Activated naive CD4-positive, alpha-beta T cell treated with anti-CD3 and anti-CD28 coated beads for 36 hours (primary cell): ENCODE measurements at regions of chr12 and their contacts with region 1.

Region 1: GRCh38 chr12:94101738-94102660 is 46.4 kb upstream of the PLXNC1 start:
- DNase-seq: peak; percentile 93
- H3K4me3 Mint-ChIP-seq: peak overlapping the region; percentile 78
- H3K27ac Mint-ChIP-seq: peak overlapping the region; percentile 7
- H3K4me1 Mint-ChIP-seq: peaks cover 16% of the 10 kb centered on the region
- H3K27me3 Mint-ChIP-seq: no peaks in the 10 kb centered on the region

Region 2: DNA sequence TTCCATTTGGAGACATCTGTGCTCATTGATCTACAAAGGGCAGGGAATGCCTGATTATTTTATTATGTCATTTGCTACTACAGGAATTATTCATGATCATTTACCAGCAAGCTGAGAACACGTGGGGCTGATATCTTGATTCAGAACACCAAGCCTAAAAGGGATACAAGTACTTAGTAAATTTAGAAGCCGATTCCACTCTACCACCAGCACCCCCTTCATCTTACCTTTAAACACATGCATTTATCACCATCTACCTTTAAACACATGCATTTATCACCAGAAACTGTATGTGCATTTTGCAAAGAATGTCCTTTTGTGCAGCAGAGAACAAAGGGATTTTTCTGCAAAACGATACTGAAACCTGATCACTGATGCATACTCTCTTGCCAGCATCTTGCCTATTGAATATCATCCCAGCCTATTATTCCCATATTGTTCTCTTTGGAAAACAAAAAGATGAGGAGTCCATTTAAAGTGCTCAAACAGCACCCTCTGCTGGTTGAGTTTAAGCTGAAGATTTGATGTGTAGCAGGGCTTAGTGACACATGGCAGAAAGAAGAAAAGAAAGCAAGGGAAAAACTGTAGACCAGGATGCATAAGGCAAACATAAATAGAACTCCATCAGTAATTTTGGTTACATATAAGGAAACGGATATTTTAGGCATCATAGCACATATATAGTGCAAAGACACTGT is 1531.8 kb before region 1 on chr12:
- CTCF ChIA-PET with region 1: no interaction called
- intact Hi-C with region 1: loop called (anchors 10 kb)
- DNase-seq: peak; percentile 67
- H3K4me3 Mint-ChIP-seq: no peak overlapping the region
- H3K27ac Mint-ChIP-seq: no peak overlapping the region
- H3K4me1 Mint-ChIP-seq: peaks cover 32% of the 10 kb centered on the region
- H3K27me3 Mint-ChIP-seq: no peaks in the 10 kb centered on the region

Region 3: DNA sequence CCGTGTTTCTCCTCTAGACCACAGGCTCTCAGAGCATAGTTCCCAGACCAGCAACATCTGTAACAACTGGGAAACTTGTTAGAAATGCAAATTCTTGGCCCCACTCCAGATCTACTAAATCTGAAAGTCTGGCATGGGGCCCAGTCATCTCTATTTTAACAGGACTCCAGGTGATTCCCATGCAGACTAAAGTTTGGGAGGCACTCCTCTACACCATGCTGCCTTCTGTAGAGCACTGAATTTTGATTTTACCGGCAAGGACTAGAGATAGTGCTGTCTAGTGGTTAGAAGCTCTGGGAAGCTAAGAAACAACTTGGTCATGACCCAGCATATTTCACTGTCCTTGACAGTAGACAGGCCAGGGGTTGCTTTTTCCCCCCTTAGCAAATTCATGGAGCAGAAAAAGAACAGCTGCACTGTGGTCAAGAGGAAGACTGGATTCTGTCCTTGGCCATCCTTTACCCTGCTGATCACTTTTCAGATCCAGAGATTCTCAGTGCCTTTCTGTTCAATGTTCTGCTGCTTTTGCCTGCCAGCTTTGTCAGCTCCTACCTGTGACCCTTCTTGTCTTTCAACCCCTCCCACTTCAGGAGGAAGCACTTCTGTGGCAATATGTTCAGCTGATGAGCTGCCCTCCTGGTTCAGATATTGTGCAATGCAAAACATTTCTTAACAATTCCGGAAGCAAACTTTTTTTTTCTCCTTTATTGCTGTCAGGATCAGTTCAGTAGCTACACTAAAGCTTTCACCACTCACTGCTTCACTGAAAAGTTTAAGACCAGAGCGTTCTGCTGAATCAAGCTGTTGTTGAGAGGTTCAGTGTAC is 858.1 kb before region 1 on chr12:
- CTCF ChIA-PET with region 1: no interaction called
- intact Hi-C with region 1: loop called (anchors 10 kb)
- DNase-seq: peak; percentile 53
- H3K4me3 Mint-ChIP-seq: peak overlapping the region; percentile 49
- H3K27ac Mint-ChIP-seq: peak overlapping the region; percentile 82
- H3K4me1 Mint-ChIP-seq: peaks cover 34% of the 10 kb centered on the region
- H3K27me3 Mint-ChIP-seq: no peaks in the 10 kb centered on the region

Region 4: DNA sequence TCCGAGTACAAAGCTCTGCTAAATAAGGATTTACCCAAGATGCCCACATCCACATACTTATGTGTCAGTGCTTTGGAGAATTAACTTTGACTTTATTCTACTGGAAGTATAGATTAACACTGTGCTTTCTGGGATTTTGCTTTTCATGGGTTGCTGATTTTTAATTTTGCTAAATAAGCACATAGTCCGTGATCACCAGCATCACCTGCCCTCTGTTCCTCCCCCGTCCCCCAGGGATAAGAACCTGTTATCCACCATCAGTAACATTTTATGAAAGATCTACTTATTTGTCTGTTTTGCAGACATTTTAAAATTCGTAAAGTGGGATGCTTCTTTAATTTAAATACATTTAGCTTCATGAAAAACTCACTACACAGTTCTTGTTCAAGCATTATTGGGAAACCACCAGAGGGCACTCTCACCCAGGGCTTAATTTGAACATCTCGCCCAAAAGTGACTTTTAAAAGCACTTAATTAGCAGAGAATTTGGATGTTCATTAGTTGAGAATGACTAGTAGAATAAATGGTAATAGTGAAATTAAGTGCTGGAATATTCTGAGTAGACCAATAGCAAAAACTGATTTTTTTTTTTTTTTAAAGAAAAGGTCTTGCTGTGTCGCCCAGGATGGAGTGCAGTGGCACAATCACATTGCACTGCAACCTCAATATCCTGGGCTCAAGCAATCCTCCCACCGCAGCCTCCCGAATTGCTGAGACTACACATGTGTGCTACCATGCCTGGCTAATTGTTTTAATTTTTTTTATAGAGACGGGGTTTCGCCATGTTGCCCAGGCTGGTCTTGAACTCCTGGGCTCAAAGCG is 599.0 kb before region 1 on chr12:
- CTCF ChIA-PET with region 1: interaction called, 113 read pairs
- intact Hi-C with region 1: loop called (anchors 1 kb)
- DNase-seq: peak; percentile 75
- H3K4me3 Mint-ChIP-seq: no peak overlapping the region
- H3K27ac Mint-ChIP-seq: no peak overlapping the region
- H3K4me1 Mint-ChIP-seq: peaks cover 17% of the 10 kb centered on the region
- H3K27me3 Mint-ChIP-seq: no peaks in the 10 kb centered on the region

Region 5: DNA sequence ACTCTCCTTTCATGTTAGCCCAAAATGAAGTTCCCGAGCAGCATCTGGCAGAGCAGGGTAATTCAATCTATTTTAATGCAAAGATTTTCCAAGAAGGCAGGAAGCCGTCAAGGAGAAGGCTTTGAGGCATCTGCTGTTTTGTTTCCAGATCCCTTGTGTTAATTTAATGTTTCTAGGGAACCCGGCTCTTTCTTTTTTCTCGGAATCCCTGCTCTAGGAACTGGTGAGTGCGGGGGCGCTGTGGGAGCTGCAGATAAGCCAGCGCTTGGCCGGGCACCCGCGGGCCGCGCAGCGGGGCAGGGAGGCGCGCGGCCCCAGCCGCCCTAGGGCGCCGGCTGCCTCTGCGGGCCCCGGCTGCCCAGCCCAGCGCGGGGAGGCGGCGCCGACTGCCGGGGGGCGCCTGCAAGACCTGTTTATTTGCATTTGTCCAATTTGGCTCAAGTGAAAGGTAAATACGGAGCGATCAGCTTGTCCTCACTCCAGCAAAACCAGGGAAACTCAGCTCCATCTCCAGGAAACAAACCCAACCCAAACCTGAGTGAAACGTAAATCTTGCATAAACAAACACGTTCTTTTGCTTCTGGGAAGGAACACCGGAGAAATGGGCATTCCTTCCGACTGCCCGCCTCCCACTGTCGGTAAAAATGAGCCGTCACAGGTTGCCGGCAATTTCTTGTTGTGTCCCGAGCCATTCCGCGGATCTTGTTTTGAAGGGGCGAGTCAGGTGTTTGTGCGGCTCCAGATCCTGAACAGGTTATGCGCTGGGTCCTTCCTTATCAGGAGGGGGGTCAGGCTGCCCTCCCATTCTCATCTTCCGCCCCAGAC is 359.7 kb before region 1 on chr12:
- CTCF ChIA-PET with region 1: interaction called, 7 read pairs
- intact Hi-C with region 1: loop called (anchors 1 kb)
- DNase-seq: peak; percentile 60
- H3K4me3 Mint-ChIP-seq: peak overlapping the region; percentile 76
- H3K27ac Mint-ChIP-seq: peak overlapping the region; percentile 75
- H3K4me1 Mint-ChIP-seq: peaks cover 46% of the 10 kb centered on the region
- H3K27me3 Mint-ChIP-seq: no peaks in the 10 kb centered on the region

Region 6: DNA sequence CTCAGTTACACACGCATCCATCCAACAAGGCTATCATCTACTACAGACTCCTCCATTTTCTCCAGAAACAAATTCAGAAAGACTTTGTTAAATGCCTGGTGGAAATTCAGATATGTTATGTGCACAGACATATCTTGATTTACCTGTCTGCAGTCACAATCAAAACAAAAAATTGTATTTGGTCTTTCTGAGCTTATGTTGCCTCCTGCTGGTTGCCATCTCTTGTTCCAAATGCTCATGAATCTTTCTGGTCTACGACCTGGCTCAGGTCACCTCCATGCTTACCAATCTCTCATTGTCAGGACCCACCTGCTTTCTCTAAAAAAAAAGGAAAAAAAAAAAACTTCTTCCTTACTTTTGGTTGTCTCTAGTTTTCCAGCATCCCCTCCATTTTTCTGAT is 122.8 kb before region 1 on chr12:
- CTCF ChIA-PET with region 1: interaction called, 136 read pairs
- intact Hi-C with region 1: loop called (anchors 1 kb)
- DNase-seq: peak; percentile 53
- H3K4me3 Mint-ChIP-seq: no peak overlapping the region
- H3K27ac Mint-ChIP-seq: no peak overlapping the region
- H3K4me1 Mint-ChIP-seq: peaks cover 27% of the 10 kb centered on the region
- H3K27me3 Mint-ChIP-seq: no peaks in the 10 kb centered on the region

Region 7: GRCh38 chr12:94112132-94112531 is 10.1 kb after region 1 on chr12:
- CTCF ChIA-PET with region 1: interaction called, 31 read pairs
- intact Hi-C with region 1: no loop called
- DNase-seq: no peak
- H3K4me3 Mint-ChIP-seq: no peak overlapping the region
- H3K27ac Mint-ChIP-seq: no peak overlapping the region
- H3K4me1 Mint-ChIP-seq: peaks cover 12% of the 10 kb centered on the region
- H3K27me3 Mint-ChIP-seq: no peaks in the 10 kb centered on the region